ENCODE measurements at regions of chr19 and their contacts with region 1.

Region 1: GRCh38 chr19:4014541-4015491 is 7.3 kb downstream of the PIAS4 start:
- DNase-seq: peak in 1 of 10 donors; percentile 58
- H3K4me3 ChIP-seq: peak overlapping the region in 39 of 59 donors; percentile 1 to 49 (median 28)
- H3K27ac ChIP-seq: peak overlapping the region; percentile 79 to 99 (median 97)
- H3K27me3 ChIP-seq: no peaks in the 10 kb centered on the region
- CTCF ChIP-seq: no peak

Region 2: DNA sequence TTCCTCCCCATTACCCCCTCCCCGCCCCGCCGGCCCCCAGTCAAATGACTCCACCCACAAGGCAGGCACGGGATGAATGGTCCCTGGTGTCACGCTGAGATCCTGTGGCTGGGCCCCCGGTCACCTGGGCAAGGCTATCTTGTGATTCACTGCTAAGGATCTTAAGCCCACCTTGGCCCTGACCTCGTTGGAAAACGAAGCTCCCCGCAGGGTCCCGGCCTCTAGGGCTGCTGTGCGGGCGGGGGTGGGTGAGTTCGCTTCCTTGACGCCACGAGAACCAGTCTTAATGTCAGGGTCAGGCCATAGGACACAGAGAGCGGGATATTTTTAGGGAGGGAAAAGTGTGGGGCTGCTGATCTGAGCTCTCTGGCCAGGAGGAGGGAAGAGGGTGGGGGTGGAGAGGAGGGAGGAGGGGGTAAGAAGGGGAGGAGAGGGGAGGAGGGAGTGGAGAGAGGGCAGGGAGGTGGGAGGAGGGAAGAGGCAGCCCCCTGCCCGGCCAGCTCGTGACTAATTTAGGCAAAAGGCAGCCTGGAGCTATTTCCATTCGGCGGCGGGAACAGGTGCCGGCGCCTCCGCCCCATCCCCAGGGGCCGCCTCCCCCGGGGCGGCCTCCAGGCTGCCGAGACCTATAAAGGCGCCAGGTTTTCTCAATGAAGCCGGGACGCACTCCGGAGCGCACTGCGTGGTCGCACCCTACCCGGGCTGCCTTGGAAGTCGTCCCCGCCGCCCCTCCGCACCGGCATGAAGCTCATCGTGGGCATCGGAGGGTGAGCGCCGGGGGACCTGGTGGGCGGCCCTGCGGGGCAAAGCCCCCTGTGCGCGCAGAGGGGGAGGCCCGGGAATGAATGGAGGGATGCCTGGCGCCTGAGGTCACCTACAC is 81.6 kb before region 1 on chr19 and contains the start of gene NMRK2:
- intact Hi-C with region 1: no loop called
- DNase-seq: no peak
- H3K4me3 ChIP-seq: peak within 1 kb of the TSS in 28 of 59 donors; percentile 7 to 50 (median 28)
- H3K27ac ChIP-seq: no peak within 1 kb of the TSS
- H3K27me3 ChIP-seq: peaks cover 0 to 28% (median 12%) of the 10 kb centered on the region in 45 donors
- CTCF ChIP-seq: no peak
- total RNA-seq, gene NMRK2: 0.36 to 1.5 (median 0.75) TPM in 11 of 120 experiments, not detected in the others

Region 3: GRCh38 chr19:4035582-4035981 is 20.8 kb after region 1 on chr19:
- intact Hi-C with region 1: loop called in 1 of 2 experiments (anchors 2 kb)
- DNase-seq: no peak
- H3K4me3 ChIP-seq: no peak overlapping the region
- H3K27ac ChIP-seq: peak overlapping the region in 57 of 59 donors; percentile 64 to 99 (median 94)
- H3K27me3 ChIP-seq: no peaks in the 10 kb centered on the region
- CTCF ChIP-seq: no peak

Region 4: GRCh38 chr19:4052050-4052999 is 37.5 kb after region 1 on chr19:
- intact Hi-C with region 1: no loop called
- DNase-seq: peak in 3 of 10 donors; percentile 55 to 75 (median 62)
- H3K4me3 ChIP-seq: peak overlapping the region in 40 of 59 donors; percentile 0 to 44 (median 26)
- H3K27ac ChIP-seq: peak overlapping the region; percentile 42 to 98 (median 86)
- H3K27me3 ChIP-seq: no peaks in the 10 kb centered on the region
- CTCF ChIP-seq: no peak

Region 5: GRCh38 chr19:4065430-4066175 is 50.8 kb after region 1 on chr19:
- intact Hi-C with region 1: loop called in 1 of 2 experiments (anchors 5 kb)
- DNase-seq: peak; percentile 86 to 99 (median 96)
- H3K4me3 ChIP-seq: peak overlapping the region; percentile 59 to 97 (median 86)
- H3K27ac ChIP-seq: peak overlapping the region in 53 of 59 donors; percentile 68 to 100 (median 97)
- H3K27me3 ChIP-seq: no peaks in the 10 kb centered on the region
- CTCF ChIP-seq: peak in 10 of 56 donors; percentile 6 to 24 (median 14)

Region 6: GRCh38 chr19:4123615-4124568 is 109.1 kb after region 1 on chr19 and contains the start of gene MAP2K2:
- intact Hi-C with region 1: loop called (anchors 5 kb)
- DNase-seq: peak; percentile 87 to 98 (median 94)
- H3K4me3 ChIP-seq: peak within 1 kb of the TSS; percentile 55 to 87 (median 72)
- H3K27ac ChIP-seq: peak within 1 kb of the TSS in 57 of 59 donors; percentile 25 to 96 (median 85)
- H3K27me3 ChIP-seq: no peaks in the 10 kb centered on the region
- CTCF ChIP-seq: peak in 37 of 56 donors; percentile 9 to 65 (median 31)
- total RNA-seq, gene MAP2K2: 118 to 197 (median 143) TPM